Activated B cell treated with CpG ODN at 0.5 μM for 24 hours (primary cell): ENCODE measurements at regions of chr1 and their contacts with region 1.

Region 1: DNA sequence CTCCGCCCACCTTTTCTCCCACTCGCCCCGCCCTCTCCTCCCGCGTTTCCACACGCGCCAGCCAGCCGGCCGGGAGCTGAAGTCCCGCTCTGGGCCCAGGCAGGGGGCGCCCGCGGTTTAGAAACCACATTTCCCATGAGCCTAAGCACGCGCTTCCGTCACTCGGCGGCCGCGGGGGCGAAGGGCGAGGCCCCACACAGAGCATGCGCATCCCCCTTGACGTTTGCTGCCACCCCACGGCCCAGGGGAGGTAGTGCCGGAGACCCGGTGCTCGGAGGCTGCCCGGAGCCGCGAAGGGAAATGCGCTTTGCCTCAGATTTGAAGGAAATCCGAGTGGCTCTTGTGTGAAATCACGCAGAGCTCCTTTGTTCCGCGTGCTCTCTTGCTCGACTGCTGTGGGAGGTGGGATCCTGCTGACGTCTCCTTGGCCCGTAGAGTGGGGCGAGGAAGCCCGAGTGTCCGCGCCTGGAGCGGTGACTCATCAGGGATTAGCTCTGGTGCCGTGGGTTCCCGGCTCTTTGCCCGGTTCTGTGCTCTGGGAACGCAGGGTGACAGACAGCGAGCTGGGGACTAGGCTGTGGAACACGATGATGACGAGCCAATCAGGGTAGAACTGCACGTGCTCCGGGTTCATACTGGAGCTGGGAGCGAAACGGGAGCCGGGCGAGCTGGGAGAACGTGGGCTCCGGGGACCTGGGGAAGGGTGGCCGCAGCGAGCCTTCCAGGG is 407 bp upstream of the B3GALNT2 start:
- DNase-seq: peak; percentile 96
- ATAC-seq: peak; percentile 81
- H3K4me3 Mint-ChIP-seq: peak overlapping the region; percentile 96
- H3K27ac Mint-ChIP-seq: peak overlapping the region; percentile 95
- H3K4me1 Mint-ChIP-seq: peaks cover 20% of the 10 kb centered on the region
- H3K27me3 Mint-ChIP-seq: no peaks in the 10 kb centered on the region
- CTCF ChIP-seq: no peak

Region 2: DNA sequence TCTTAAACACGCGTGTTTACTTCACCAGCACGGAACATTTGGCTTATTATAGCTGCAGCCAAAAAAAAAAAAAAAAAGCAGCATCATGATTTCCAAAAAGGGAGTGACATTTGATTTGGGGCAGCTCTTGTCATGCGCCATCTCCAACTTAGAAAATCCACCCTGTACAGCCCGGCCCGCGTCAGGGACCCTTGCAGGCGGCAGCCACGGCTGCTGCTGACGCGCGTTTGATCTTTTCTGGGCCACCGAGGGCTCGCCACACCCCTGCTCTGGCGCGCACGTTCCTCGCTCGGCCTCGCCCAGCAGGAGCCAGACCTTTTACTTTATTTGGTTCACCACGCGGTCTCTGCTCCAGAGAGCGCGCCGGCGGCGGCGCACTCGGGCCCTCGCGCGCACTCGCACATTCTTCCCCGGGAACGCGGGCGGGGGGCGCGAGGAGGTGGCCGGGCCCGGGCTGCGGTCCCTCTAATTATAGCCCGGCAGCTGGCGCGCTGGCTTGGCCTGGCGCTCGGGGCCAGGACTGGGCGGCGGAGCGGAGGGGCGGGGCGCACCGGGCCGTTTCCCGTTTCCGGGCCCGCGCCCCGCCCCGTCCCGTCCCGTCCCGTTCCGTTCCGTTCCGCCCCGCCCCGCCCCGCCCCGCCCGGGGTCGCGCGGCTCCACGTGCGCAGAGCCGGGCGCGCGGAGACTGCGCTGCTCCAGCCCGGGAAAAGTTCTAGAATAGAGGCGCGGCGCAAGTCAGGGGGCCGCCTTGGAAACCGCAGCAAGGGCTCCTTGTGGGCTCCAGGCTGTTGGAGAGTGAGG is 904.8 kb before region 1 on chr1:
- CTCF ChIA-PET with region 1: no interaction called
- POLR2A ChIA-PET with region 1: interaction called, 3 read pairs
- intact Hi-C with region 1: loop called (anchors 10 kb)
- DNase-seq: peak; percentile 67
- ATAC-seq: peak; percentile 73
- H3K4me3 Mint-ChIP-seq: peak overlapping the region; percentile 86
- H3K27ac Mint-ChIP-seq: peak overlapping the region; percentile 89
- H3K4me1 Mint-ChIP-seq: peaks cover 66% of the 10 kb centered on the region
- H3K27me3 Mint-ChIP-seq: no peaks in the 10 kb centered on the region
- CTCF ChIP-seq: no peak

Region 3: DNA sequence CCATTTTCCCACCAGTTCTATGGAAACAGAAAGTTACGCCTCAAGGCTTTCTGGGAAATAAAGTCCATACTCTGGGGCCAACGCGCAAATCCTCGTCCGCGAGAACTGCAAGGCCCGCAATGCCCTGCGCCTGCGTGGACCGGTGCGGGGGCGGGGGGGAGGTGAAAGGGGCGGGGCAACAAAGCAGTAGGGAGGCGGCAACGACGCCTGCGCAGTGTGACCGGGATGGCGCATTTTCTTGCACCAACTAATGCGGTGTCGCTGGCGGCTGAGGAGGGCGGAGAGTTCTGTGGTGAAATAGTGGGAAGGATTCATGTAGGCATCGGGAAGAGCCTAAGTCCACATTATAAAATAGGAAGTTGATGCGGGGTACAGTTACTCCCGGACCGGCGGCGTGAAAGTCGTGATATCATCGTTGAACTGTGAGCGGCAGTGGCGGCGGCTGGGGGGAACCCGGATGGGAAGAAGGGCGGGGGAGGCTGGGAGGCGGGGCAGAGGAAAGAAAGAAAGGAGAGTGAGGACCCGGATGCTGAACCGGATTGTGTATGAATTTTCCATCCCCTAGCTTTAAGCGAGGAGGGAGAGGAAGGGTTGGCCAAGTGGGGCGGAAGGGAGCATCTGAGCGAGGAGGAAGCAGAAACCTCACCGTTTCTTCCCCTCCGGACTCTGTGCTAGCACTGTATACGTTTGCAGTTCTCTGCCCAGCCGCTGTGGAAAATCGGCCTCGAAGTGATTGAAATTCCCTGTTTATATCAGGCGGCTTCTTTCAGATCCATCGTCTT is 176.1 kb before region 1 on chr1 and contains the start of gene GGPS1:
- CTCF ChIA-PET with region 1: no interaction called
- POLR2A ChIA-PET with region 1: interaction called, 6 read pairs
- intact Hi-C with region 1: loop called (anchors 1 kb)
- DNase-seq: peak; percentile 90
- ATAC-seq: peak; percentile 75
- H3K4me3 Mint-ChIP-seq: no peak within 1 kb of the TSS
- H3K27ac Mint-ChIP-seq: no peak within 1 kb of the TSS
- H3K4me1 Mint-ChIP-seq: peaks cover 27% of the 10 kb centered on the region
- H3K27me3 Mint-ChIP-seq: no peaks in the 10 kb centered on the region
- CTCF ChIP-seq: no peak
- total RNA-seq, gene GGPS1: 25.4 and 33.8 TPM in 2 replicates

Region 4: DNA sequence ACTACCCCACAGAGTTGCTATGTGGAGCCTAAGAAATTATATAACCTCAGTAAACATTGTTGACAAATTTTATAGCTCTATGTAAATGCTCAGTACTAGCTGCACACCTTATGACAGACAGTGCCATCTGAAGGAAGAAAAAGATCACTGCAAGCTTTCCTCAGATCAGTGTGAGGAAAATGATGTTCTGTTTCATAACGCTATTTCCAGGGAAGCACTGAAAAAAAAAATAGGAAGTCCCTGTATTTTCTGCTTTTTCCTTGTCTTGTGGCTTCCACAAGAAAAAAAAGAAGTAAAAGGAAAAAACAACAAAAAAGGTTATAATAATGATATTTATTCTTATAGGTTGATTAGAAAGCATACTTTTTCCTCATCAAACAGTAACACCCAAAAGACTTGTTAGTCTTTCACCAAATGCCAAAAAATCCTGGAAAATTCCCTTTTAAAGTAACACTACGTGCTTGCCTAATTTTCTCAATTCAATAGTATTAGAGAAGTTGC is 338.9 kb after region 1 on chr1:
- CTCF ChIA-PET with region 1: no interaction called
- POLR2A ChIA-PET with region 1: no interaction called
- intact Hi-C with region 1: loop called (anchors 5 kb)
- DNase-seq: no peak
- ATAC-seq: peak; percentile 60
- H3K4me3 Mint-ChIP-seq: no peak overlapping the region
- H3K27ac Mint-ChIP-seq: peak overlapping the region; percentile 62
- H3K4me1 Mint-ChIP-seq: peaks cover 86% of the 10 kb centered on the region
- H3K27me3 Mint-ChIP-seq: no peaks in the 10 kb centered on the region
- CTCF ChIP-seq: no peak

Region 5: DNA sequence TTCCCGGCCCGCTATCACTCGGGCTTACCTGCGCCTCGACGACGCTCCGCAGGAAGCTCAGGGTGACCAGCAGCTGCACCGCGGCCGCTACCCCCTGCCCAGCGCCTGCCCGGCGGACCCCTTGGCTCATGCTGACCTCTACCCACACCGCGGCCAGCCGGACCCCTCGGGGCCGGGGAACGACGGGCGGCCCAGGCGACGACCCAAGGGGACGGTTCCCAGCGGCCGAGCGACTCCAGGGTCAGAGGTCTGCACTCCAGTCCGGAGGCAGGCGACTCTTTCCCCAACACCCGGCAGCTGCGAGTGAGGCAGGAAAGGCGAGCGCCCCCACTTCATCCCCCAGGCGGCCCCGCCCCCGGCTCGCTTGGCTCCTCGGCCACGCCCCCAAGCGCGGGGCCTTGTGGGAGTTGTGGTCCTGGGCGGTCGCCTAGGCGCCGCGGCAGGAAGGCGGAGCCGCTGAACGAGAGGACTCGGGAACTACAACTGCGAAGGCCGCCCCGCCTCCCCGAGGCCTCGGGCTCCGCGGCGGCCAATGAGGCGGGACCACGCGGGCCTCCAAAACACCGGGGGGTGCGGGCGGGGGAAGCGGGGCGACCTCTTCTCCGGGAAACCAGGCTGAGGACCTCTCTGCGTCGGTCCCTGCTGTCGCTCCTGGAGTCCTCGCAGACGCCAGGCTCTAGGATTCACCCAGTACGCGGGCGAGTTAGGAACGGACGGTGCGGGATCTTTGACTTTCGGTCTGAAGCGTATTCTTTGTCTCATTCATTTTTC is 777.2 kb after region 1 on chr1 and contains the start of gene ERO1B:
- CTCF ChIA-PET with region 1: no interaction called
- POLR2A ChIA-PET with region 1: no interaction called
- intact Hi-C with region 1: loop called (anchors 2 kb)
- DNase-seq: peak; percentile 100
- ATAC-seq: peak; percentile 91
- H3K4me3 Mint-ChIP-seq: peak within 1 kb of the TSS; percentile 97
- H3K27ac Mint-ChIP-seq: peak within 1 kb of the TSS; percentile 89
- H3K4me1 Mint-ChIP-seq: peaks cover 40% of the 10 kb centered on the region
- H3K27me3 Mint-ChIP-seq: no peaks in the 10 kb centered on the region
- CTCF ChIP-seq: no peak
- total RNA-seq, gene ERO1B: 13.2 and 17.5 TPM in 2 replicates

Region 6: GRCh38 chr1:236795035-236795756 is 1290.5 kb after region 1 on chr1 and contains the start of gene MTR:
- CTCF ChIA-PET with region 1: no interaction called
- POLR2A ChIA-PET with region 1: no interaction called
- intact Hi-C with region 1: loop called (anchors 10 kb)
- DNase-seq: peak; percentile 91
- ATAC-seq: peak; percentile 94
- H3K4me3 Mint-ChIP-seq: peak within 1 kb of the TSS; percentile 97
- H3K27ac Mint-ChIP-seq: peak within 1 kb of the TSS; percentile 98
- H3K4me1 Mint-ChIP-seq: peaks cover 41% of the 10 kb centered on the region
- H3K27me3 Mint-ChIP-seq: peaks cover 2% of the 10 kb centered on the region
- CTCF ChIP-seq: no peak
- total RNA-seq, gene MTR: 31.2 and 37.1 TPM in 2 replicates